Pancreas (tissue), 10 donors: ENCODE measurements at regions of chr16 and their contacts with region 1.

Region 1: DNA sequence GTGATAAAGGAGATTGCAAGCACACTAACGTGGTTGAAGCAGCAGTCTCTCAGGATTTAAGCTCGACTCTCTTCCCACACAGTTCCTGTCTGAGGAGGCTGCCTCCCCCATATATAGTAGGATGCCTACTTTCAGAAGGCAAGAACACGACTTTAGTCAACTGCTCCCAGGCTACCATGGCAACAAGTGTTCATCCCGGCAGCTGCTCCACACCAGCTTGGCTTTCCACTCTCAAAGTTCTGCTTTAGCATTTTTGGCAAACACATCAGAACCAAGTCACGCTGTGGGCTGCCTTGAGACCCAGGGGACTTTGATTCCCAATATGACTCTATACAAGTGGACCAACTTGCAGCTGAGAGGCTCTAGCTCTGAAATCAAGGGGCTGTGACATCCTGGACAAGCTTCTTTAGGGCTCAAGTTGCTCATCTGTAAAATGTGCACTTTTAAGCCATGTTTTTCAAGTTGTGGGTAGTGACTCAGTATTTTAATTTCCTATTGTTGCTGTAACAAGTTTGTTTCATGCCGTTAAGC is 16.5 kb downstream of the ZP2 start:
- DNase-seq: no peak
- ATAC-seq: no peak
- H3K4me3 ChIP-seq: no peak overlapping the region
- H3K27ac ChIP-seq: no peak overlapping the region
- H3K4me1 ChIP-seq: no peaks in the 10 kb centered on the region
- H3K27me3 ChIP-seq: no peaks in the 10 kb centered on the region
- CTCF ChIP-seq: no peak

Region 2: DNA sequence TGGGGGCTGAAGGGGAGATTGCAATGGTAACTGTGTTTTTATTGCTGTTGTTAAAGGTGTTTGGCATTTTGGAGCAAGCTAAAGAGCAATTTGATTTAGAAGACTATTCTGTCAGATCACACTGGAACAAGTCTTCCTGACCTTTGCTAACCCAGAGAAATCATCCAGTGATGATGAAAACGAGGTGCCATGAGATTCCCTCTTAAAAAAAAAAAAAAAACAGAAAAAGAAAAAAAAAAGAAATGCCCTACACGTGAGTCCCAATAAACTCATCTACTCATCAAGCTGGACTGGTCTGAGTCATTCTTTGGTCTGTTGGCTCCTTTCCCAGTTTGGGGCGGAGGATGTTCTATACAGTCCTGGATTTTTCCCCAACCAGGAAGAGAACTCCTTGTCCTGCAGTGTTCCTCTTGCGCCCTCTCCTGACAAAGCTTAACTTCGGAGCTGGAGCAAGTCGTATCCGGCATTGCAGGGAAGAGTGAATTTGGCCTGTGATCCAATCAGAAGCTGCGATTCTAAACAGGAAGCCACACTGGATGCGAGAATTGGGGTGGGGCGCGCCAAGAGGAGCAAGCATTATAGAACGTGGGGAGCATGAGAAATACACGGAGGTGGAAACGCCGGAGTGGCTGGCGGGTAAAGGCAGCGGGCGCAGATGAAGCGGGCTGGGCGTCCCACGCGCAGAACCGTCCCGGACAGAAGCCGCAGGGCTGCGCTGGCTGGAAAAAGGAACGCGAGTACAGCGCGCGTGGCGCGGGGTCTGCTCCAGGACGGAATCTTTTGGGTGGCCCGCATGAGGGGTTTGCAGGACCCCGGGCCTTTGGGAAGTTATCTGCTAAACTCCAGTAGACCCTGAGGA is 105.7 kb after region 1 on chr16:
- intact Hi-C with region 1: loop called in 1 of 3 experiments (anchors 10 kb)
- DNase-seq: peak; percentile 80 to 98 (median 94)
- ATAC-seq: peak; percentile 88 to 95 (median 92)
- H3K4me3 ChIP-seq: peak overlapping the region; percentile 63 to 79 (median 69)
- H3K27ac ChIP-seq: peak overlapping the region; percentile 76 to 89 (median 83)
- H3K4me1 ChIP-seq: peaks cover 0 to 4% (median 0%) of the 10 kb centered on the region in 3 donors
- H3K27me3 ChIP-seq: no peaks in the 10 kb centered on the region
- CTCF ChIP-seq: peak; percentile 45 to 63 (median 52)

Region 3: DNA sequence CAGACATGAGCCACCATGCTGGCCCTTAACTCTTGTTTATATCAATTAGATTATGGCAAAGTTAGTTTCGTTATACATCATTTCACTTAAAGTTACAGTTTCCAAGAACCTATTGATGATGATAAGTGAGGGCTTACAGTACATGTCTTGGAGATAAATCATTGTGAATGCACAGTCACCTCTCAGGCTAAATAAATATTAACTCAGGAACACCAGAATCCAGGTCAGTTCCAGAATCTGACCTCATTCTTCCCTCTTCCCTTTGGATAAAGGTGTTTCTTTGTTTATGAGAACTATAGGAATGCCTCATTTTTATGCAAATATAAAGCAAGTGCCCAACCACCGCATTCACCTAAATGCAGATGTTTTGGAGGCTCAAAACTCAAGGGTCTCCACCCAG is 131.6 kb after region 1 on chr16:
- intact Hi-C with region 1: no loop called
- DNase-seq: no peak
- ATAC-seq: peak in 1 of 4 donors; percentile 15
- H3K4me3 ChIP-seq: no peak overlapping the region
- H3K27ac ChIP-seq: no peak overlapping the region
- H3K4me1 ChIP-seq: no peaks in the 10 kb centered on the region
- H3K27me3 ChIP-seq: no peaks in the 10 kb centered on the region
- CTCF ChIP-seq: no peak